ENCODE measurements at regions of chr6 and their contacts with region 1.

Region 1: GRCh38 chr6:100455230-100456124 is 9.2 kb downstream of the SIM1 start:
- DNase-seq: no peak
- H3K4me3 Mint-ChIP-seq: no peak overlapping the region
- H3K27ac Mint-ChIP-seq: peak overlapping the region; percentile 63
- H3K4me1 Mint-ChIP-seq: peaks cover 10% of the 10 kb centered on the region
- H3K27me3 Mint-ChIP-seq: peaks cover 65% of the 10 kb centered on the region

Region 2: GRCh38 chr6:98827295-98828159 is 1628.0 kb before region 1 on chr6:
- intact Hi-C with region 1: loop called (anchors 2 kb)
- DNase-seq: no peak
- H3K4me3 Mint-ChIP-seq: no peak overlapping the region
- H3K27ac Mint-ChIP-seq: no peak overlapping the region
- H3K4me1 Mint-ChIP-seq: peaks cover 30% of the 10 kb centered on the region
- H3K27me3 Mint-ChIP-seq: peaks cover 86% of the 10 kb centered on the region

Region 3: GRCh38 chr6:100472674-100473073 is 17.2 kb after region 1 on chr6:
- intact Hi-C with region 1: loop called (anchors 1 kb)
- DNase-seq: peak; percentile 41
- H3K4me3 Mint-ChIP-seq: no peak overlapping the region
- H3K27ac Mint-ChIP-seq: no peak overlapping the region
- H3K4me1 Mint-ChIP-seq: peaks cover 16% of the 10 kb centered on the region
- H3K27me3 Mint-ChIP-seq: peaks cover 43% of the 10 kb centered on the region

Measured in activated T-helper 1 cell treated with anti-CD3 and anti-CD28 coated beads, Interleukin-12 subunit alpha, Interleukin-12 subunit beta, Interleukin-2, Interleukin-4 antibody, amounts not matched to agents 30 ng/mL and 10 ng/mL and 1 ng/mL, durations not matched to agents 14 hours and 24 hours and 36 hours (primary cell).